Cardiac septum (tissue), 1 donor: ENCODE measurements at regions of chr9 and their contacts with region 1.

Region 1: GRCh38 chr9:120698766-120699165 is 15.5 kb downstream of the MEGF9 start:
- DNase-seq: no peak

Region 2: GRCh38 chr9:120745278-120745677 is 46.5 kb after region 1 on chr9:
- intact Hi-C with region 1: loop called (anchors 5 kb)
- DNase-seq: no peak